PC-9 (cell line): ENCODE measurements at regions of chr1 and their contacts with region 1.

Region 1: DNA sequence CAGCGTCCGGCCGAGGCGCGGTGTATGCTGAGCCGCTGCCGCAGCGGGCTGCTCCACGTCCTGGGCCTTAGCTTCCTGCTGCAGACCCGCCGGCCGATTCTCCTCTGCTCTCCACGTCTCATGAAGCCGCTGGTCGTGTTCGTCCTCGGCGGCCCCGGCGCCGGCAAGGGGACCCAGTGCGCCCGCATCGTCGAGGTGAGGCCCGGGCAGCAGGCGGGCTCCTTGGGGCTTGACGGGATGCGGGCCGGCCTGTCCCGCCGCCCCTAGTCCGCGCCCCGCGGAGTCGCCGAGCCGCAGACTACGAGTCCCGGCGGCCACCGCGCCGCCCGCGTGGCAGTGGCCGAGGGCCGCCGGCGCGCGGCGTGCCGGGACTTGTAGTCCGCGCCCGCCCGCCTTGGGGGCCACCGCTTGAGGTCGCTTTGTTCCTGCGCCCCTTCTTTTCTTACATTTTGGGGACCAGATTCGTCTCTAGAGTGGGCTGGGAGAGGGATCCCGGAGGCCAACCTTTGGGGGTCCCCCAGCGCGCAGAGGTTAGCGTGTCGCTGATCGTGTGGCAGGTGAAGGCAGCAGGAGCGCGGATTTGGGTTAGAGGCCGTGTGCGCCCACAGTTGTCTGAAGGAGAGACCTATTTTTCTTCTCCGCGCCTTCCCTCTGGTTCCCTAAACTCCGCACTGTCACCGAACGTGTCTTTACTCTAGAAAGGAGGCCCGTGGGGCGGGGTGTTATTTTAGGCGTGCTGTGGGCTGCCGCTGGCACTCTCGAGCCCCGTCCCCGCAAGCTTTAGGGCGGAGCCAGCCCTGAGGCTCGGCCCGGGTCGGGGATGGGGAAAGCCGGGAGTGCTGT is 553 bp downstream of the CMPK1 start:
- DNase-seq: peak; percentile 62 to 77
- H3K4me3 ChIP-seq: peak overlapping the region; percentile 96
- H3K27ac ChIP-seq: peak overlapping the region; percentile 93
- H3K4me1 ChIP-seq: peaks cover 30% of the 10 kb centered on the region
- H3K27me3 ChIP-seq: no peaks in the 10 kb centered on the region
- CTCF ChIP-seq: no peak; the same call in 1 of the 2 replicates

Region 2: GRCh38 chr1:47211796-47212269 is 122.3 kb before region 1 on chr1:
- CTCF ChIA-PET with region 1: no interaction called
- POLR2A ChIA-PET with region 1: no interaction called
- intact Hi-C with region 1: no loop called
- DNase-seq: no peak
- H3K4me3 ChIP-seq: no peak overlapping the region
- H3K27ac ChIP-seq: no peak overlapping the region
- H3K4me1 ChIP-seq: no peaks in the 10 kb centered on the region
- H3K27me3 ChIP-seq: no peaks in the 10 kb centered on the region
- CTCF ChIP-seq: no peak

Region 3: DNA sequence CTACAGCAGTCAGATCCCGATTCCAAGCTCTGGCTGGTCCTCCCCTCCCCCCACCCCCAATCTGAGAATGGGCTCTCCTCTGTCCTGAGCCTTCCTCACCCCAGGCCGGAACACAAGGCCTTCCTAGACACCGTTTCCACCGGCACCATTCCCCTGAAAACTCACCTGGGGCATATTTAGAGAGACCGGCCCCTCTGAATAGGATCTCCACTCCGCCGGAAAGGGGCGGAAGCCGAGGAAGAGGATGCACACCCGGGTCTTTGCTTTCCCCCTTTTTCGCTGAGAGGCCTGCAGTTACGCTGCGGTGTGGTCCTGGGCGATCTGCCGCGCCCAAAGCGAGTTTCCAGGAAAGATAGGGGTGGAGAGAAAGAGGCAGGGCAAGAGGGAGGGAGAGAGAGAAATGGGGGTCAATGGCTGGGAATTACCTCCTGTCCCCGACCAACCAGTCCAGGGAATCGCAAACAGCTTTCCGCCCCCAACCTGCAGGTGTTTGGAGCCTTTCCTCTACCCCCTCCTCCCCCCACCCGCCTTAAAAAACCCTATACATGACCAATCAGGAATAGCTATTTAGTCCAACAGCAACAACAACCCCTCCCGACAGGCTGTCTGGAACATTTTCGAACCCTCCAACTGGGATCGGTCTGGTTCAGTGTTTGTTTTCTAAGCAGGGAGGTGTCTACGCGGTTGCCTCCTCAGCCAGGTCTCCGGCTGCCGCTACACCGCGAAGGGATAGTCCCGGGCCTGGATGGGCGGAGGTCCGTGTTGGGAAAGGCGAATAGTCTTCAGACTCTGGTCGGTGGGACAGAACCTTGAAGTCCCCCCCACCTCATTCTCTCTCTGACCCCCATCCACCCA is 104.9 kb before region 1 on chr1:
- CTCF ChIA-PET with region 1: no interaction called
- POLR2A ChIA-PET with region 1: interaction called, 15 read pairs
- intact Hi-C with region 1: no loop called
- DNase-seq: no peak
- H3K4me3 ChIP-seq: no peak overlapping the region
- H3K27ac ChIP-seq: no peak overlapping the region
- H3K4me1 ChIP-seq: no peaks in the 10 kb centered on the region
- H3K27me3 ChIP-seq: peaks cover 52% of the 10 kb centered on the region
- CTCF ChIP-seq: no peak